CD14-positive monocyte (primary cell): ENCODE measurements at regions of chr16 and their contacts with region 1.

Region 1: GRCh38 chr16:57447186-57447962 is at the starts of genes CIAPIN1 and COQ9:
- DNase-seq: peak; percentile 91 to 93 (median 91)
- H3K4me3 ChIP-seq: peak within 1 kb of the TSS; percentile 88 to 92 (median 92)
- H3K4me3 Mint-ChIP-seq: peak within 1 kb of the TSS; percentile 93 to 94
- H3K27ac ChIP-seq: peak within 1 kb of the TSS; percentile 40 to 89
- H3K27ac Mint-ChIP-seq: peak within 1 kb of the TSS; percentile 81 to 96 (median 87)
- H3K4me1 ChIP-seq: peaks cover 16 to 22% of the 10 kb centered on the region in 2 donors
- H3K4me1 Mint-ChIP-seq: peaks cover 19% of the 10 kb centered on the region
- H3K27me3 ChIP-seq: no peaks in the 10 kb centered on the region
- H3K27me3 Mint-ChIP-seq: no peaks in the 10 kb centered on the region
- CTCF ChIP-seq: no peak
- polyA plus RNA-seq, gene CIAPIN1: 24.0 to 46.5 (median 42.1) TPM
- polyA plus RNA-seq, gene COQ9: 32.7 to 47.8 (median 38.4) TPM

Region 2: GRCh38 chr16:57167953-57168352 is 279.4 kb before region 1 on chr16:
- intact Hi-C with region 1: no loop called
- DNase-seq: peak; percentile 42 to 54 (median 53)
- H3K4me3 ChIP-seq: no peak overlapping the region
- H3K4me3 Mint-ChIP-seq: no peak overlapping the region
- H3K27ac ChIP-seq: peak overlapping the region in 1 of 2 donors; percentile 76
- H3K27ac Mint-ChIP-seq: peak overlapping the region in 5 of 7 donors; percentile 50 to 92 (median 57)
- H3K4me1 ChIP-seq: peaks cover 24% of the 10 kb centered on the region in 2 donors
- H3K4me1 Mint-ChIP-seq: peaks cover 25% of the 10 kb centered on the region
- H3K27me3 ChIP-seq: no peaks in the 10 kb centered on the region
- H3K27me3 Mint-ChIP-seq: no peaks in the 10 kb centered on the region
- CTCF ChIP-seq: peak; percentile 72

Region 3: DNA sequence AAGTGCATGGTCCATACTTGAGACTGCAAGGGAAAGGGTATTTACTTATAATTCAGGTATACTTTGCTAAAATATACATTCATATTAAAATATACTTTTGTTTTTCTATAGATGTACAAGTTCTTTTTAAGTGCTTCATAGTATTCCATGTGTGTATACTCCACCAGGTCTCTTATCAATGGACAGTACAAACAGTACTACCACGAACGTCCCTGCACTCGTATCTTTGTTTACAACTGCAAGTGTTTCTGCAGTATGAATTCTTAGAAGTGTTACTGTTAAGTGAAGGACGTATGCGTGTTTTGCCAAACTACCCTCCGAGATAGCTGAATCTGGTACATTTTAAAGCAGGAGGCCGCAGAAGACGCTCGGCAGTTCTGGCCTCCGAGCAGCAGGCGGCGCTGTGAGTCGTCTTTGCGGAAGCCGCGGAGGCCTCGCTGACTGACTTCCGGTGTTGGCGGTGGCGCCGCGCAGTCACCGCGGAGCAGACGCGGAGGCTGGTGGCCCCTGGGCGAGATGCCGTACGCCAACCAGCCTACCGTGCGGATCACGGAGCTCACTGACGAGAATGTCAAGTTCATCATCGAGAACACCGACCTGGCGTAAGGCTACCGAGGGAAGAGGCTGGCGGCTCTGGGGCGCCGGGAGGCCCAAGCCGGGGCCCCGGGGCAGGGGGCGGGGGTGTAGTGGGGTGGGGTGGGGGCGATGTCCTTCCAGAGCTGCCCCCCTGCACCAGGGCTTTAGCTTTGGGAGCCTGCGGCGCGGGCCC is 15.0 kb after region 1 on chr16 and contains the start of gene POLR2C:
- intact Hi-C with region 1: loop called in 1 of 2 experiments (anchors 2 kb)
- DNase-seq: peak; percentile 86 to 87 (median 87)
- H3K4me3 ChIP-seq: peak within 1 kb of the TSS; percentile 53 to 85 (median 74)
- H3K4me3 Mint-ChIP-seq: peak within 1 kb of the TSS; percentile 99
- H3K27ac ChIP-seq: peak within 1 kb of the TSS; percentile 9 to 80
- H3K27ac Mint-ChIP-seq: peak within 1 kb of the TSS; percentile 94 to 99 (median 97)
- H3K4me1 ChIP-seq: peaks cover 9 to 11% of the 10 kb centered on the region in 2 donors
- H3K4me1 Mint-ChIP-seq: peaks cover 22% of the 10 kb centered on the region
- H3K27me3 ChIP-seq: no peaks in the 10 kb centered on the region
- H3K27me3 Mint-ChIP-seq: peaks cover 0 to 3% (median 2%) of the 10 kb centered on the region in 3 donors
- CTCF ChIP-seq: peak; percentile 97
- polyA plus RNA-seq, gene POLR2C: 22.6 to 51.3 (median 24.4) TPM

Region 4: DNA sequence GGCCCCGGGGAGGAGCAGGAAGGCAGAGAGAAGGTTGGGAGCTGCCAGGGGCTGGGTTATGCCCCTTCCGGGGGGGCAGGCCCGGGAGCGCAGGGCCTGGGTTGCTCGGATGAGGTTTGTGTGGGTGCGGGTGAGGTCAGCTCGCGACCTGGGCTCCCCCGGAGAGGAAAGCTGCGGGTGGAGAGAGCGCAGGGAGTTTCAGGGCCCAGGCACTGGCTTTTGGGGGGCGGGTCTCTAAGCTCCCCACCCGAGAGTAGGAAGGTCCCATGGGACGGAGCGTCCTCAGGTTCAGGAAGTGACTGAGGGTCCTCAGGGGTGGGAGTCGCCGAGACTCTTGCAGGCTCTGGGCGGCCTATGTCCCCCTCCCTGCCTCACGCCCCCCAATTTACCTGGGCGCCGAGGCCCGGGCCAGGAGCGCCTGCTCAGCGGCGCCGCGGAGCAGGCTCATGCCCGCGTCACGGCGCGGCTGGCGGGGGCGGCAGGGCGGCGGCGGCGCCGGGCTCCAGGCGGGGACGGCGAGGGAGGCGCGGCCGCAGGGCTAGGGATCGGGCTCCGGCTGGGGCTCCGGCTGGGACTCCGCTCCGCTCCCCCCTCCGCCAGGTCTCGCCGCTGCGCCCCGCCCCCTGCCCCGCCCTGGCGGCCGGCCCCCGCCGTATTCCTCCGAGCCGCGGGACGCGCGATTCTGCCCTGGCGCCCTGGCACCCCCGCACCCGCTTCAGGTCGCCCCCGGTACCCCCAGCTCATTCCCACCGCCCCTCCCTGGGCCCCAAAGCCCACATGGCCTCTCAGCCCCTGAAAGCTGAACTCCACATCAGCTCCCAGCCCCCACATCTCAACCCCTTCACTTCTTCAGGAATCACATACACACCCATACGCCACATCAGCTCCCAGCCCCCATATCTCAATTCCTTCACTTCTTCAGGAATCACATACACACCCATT is 38.8 kb after region 1 on chr16 and contains the start of gene DOK4:
- intact Hi-C with region 1: no loop called
- DNase-seq: peak; percentile 34 to 38 (median 34)
- H3K4me3 ChIP-seq: peak within 1 kb of the TSS; percentile 33 to 71 (median 35)
- H3K4me3 Mint-ChIP-seq: peak within 1 kb of the TSS; percentile 71 to 83
- H3K27ac ChIP-seq: no peak within 1 kb of the TSS
- H3K27ac Mint-ChIP-seq: peak within 1 kb of the TSS in 3 of 7 donors; percentile 63 to 81 (median 73)
- H3K4me1 ChIP-seq: peaks cover 8 to 11% of the 10 kb centered on the region in 2 donors
- H3K4me1 Mint-ChIP-seq: peaks cover 10% of the 10 kb centered on the region
- H3K27me3 ChIP-seq: peaks cover 0 to 15% of the 10 kb centered on the region in 2 donors
- H3K27me3 Mint-ChIP-seq: peaks cover 14 to 28% (median 18%) of the 10 kb centered on the region in 3 donors
- CTCF ChIP-seq: no peak
- polyA plus RNA-seq, gene DOK4: 0.09 to 0.17 TPM in 2 of 3 donors, not detected in the other